B cell (primary cell): ENCODE measurements at regions of chr6 and their contacts with region 1.

Region 1: DNA sequence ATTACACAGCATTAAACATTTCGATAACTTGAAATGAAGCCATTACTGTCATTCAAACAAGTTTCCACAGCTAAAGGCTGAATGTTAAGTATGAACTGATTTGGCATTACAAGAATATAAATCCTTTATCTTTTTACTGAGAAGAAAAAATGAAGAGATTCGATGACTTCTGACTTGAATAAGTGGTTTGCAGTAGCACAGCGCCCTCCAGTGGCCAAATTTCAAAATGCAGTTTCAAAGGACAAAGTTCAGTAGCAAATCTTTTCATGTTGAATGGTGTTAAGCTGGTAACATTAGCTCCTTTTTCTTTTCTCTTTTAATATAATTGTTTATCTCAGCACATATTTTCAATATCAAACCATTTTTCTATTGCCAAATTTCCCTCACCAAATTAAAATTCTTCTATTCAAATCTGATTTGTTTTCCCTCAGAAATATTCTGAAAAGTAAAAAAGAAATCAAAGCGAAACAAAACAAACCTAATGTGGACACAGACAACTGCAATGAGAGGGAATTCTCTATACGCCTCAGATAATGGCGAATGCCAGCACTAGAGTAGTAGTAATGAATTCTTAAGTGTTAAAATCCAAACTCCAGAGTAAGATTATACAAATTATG is 145.7 kb downstream of the BTBD9 start:
- DNase-seq: peak; percentile 82
- ATAC-seq: peak; percentile 45
- H3K4me3 ChIP-seq: no peak overlapping the region
- H3K4me3 Mint-ChIP-seq: no peak overlapping the region
- H3K27ac ChIP-seq: no peak overlapping the region
- H3K27ac Mint-ChIP-seq: no peak overlapping the region
- H3K4me1 ChIP-seq: no peaks in the 10 kb centered on the region
- H3K4me1 Mint-ChIP-seq: peaks cover 11% of the 10 kb centered on the region
- H3K27me3 ChIP-seq: no peaks in the 10 kb centered on the region
- H3K27me3 Mint-ChIP-seq: no peaks in the 10 kb centered on the region
- CTCF ChIP-seq: peak; percentile 98

Region 2: DNA sequence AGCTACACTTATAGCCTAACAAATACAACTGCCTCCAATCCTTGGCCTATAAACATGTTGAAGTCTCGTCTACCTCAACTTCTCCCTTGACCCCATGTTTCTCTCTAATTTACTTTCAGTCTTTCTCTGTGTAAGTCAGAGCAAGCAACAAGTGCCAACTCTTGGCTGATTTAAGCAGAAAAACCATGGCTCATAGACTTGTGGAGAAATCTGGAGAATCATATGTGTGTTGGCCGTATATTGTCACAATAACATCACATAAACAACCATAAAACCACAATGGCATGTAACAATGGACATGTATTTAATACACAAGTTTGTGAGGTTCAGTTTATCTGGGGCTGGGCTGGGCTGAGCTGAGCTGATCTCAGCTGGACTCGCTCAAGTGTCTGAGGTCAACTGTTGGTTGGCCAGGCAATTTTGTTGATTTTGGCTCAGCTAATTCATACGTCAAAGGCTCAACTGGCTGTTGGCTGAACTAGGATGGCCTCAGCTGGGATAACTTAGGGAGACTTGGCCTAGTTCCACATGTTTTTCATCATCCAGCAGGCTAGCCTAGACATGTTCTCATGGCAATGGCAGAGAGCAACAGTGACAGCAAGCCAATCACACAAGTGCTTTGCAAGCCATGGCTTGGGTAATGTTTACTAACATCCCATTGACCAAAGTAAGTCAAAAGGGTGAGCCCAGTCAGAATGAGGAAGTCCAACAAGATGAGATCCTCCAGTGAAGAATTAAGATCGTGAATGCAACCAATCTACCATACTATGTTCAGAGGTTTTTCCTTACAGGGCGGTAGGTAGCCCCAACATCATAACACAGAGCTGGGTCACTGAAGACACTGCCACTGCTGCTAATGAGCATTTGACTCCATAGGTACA is 1249.4 kb before region 1 on chr6:
- CTCF ChIA-PET with region 1: no interaction called
- POLR2A ChIA-PET with region 1: no interaction called
- intact Hi-C with region 1: no loop called
- DNase-seq: no peak
- ATAC-seq: no peak
- H3K4me3 ChIP-seq: no peak overlapping the region
- H3K4me3 Mint-ChIP-seq: no peak overlapping the region
- H3K27ac ChIP-seq: no peak overlapping the region
- H3K27ac Mint-ChIP-seq: no peak overlapping the region
- H3K4me1 ChIP-seq: peaks cover 5 to 6% of the 10 kb centered on the region in 2 donors
- H3K4me1 Mint-ChIP-seq: peaks cover 4% of the 10 kb centered on the region
- H3K27me3 ChIP-seq: peaks cover 0 to 7% (median 0%) of the 10 kb centered on the region in 4 experiments
- H3K27me3 Mint-ChIP-seq: peaks cover 6% of the 10 kb centered on the region
- CTCF ChIP-seq: no peak

Region 3: DNA sequence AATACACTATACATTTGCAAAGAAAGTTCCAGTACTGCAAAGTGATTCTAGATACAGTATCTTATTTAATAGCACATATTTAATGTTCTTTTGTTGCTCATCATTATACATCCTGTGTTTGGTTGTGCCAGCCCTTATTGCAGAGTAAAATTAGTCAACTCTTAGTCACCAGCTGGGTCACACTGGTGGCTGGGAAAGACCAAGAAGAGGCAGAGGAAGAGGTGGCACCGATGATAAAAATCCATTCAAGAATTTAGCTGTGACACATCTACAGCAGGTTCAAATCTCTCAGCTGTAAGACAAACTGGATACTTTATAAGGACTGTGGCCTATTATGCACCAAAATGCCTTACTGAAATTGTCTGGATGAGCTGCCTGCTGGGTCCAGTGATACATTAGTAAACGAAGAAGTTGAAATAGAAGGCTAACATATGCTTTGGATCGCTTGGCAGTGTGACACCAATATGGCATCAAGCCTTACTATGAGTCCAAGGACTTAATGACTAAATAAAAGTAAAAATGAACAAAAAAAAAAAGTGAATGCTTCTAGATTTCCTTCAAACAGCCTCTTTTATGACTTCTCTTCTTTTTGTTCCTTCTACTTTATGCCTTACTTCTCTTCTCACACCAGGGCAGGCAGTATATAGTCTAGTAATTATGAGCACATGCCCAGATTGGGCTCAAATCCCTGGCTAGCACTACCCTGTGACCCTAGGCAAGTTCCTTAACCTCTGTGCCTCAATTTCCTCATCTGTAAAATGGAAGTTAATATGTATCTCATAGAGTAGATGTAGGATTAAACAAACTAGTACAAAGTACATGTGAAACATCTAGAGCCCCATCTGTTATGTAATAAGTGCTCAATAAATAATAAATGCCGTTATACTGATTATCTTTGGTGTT is 1169.7 kb before region 1 on chr6:
- CTCF ChIA-PET with region 1: no interaction called
- POLR2A ChIA-PET with region 1: no interaction called
- intact Hi-C with region 1: loop called (anchors 1 kb)
- DNase-seq: no peak
- ATAC-seq: no peak
- H3K4me3 ChIP-seq: no peak overlapping the region
- H3K4me3 Mint-ChIP-seq: no peak overlapping the region
- H3K27ac ChIP-seq: no peak overlapping the region
- H3K27ac Mint-ChIP-seq: no peak overlapping the region
- H3K4me1 ChIP-seq: no peaks in the 10 kb centered on the region
- H3K4me1 Mint-ChIP-seq: peaks cover 2% of the 10 kb centered on the region
- H3K27me3 ChIP-seq: no peaks in the 10 kb centered on the region
- H3K27me3 Mint-ChIP-seq: no peaks in the 10 kb centered on the region
- CTCF ChIP-seq: no peak

Region 4: GRCh38 chr6:37698261-37699137 is 795.5 kb before region 1 on chr6:
- CTCF ChIA-PET with region 1: interaction called, 7 read pairs
- POLR2A ChIA-PET with region 1: interaction called, 3 read pairs
- intact Hi-C with region 1: loop called (anchors 5 kb)
- DNase-seq: peak; percentile 83
- ATAC-seq: peak; percentile 37
- H3K4me3 ChIP-seq: peak overlapping the region; percentile 40 to 72 (median 60)
- H3K4me3 Mint-ChIP-seq: peak overlapping the region; percentile 88
- H3K27ac ChIP-seq: no peak overlapping the region
- H3K27ac Mint-ChIP-seq: peak overlapping the region; percentile 90
- H3K4me1 ChIP-seq: peaks cover 24 to 25% of the 10 kb centered on the region in 2 donors
- H3K4me1 Mint-ChIP-seq: peaks cover 26% of the 10 kb centered on the region
- H3K27me3 ChIP-seq: peaks cover 0 to 37% (median 18%) of the 10 kb centered on the region in 4 experiments
- H3K27me3 Mint-ChIP-seq: peaks cover 27% of the 10 kb centered on the region
- CTCF ChIP-seq: no peak

Region 5: GRCh38 chr6:38034274-38034914 is 459.6 kb before region 1 on chr6:
- CTCF ChIA-PET with region 1: interaction called, 24 read pairs
- POLR2A ChIA-PET with region 1: no interaction called
- intact Hi-C with region 1: loop called (anchors 1 kb)
- DNase-seq: peak; percentile 26
- ATAC-seq: no peak
- H3K4me3 ChIP-seq: no peak overlapping the region
- H3K4me3 Mint-ChIP-seq: no peak overlapping the region
- H3K27ac ChIP-seq: no peak overlapping the region
- H3K27ac Mint-ChIP-seq: no peak overlapping the region
- H3K4me1 ChIP-seq: peaks cover 0 to 16% of the 10 kb centered on the region in 2 donors
- H3K4me1 Mint-ChIP-seq: peaks cover 56% of the 10 kb centered on the region
- H3K27me3 ChIP-seq: no peaks in the 10 kb centered on the region
- H3K27me3 Mint-ChIP-seq: no peaks in the 10 kb centered on the region
- CTCF ChIP-seq: peak; percentile 40

Region 6: GRCh38 chr6:38518511-38519304 is 24.7 kb after region 1 on chr6:
- CTCF ChIA-PET with region 1: interaction called, 10 read pairs
- POLR2A ChIA-PET with region 1: no interaction called
- intact Hi-C with region 1: no loop called
- DNase-seq: no peak
- ATAC-seq: no peak
- H3K4me3 ChIP-seq: no peak overlapping the region
- H3K4me3 Mint-ChIP-seq: no peak overlapping the region
- H3K27ac ChIP-seq: no peak overlapping the region
- H3K27ac Mint-ChIP-seq: no peak overlapping the region
- H3K4me1 ChIP-seq: peaks cover 8 to 9% of the 10 kb centered on the region in 2 donors
- H3K4me1 Mint-ChIP-seq: peaks cover 20% of the 10 kb centered on the region
- H3K27me3 ChIP-seq: no peaks in the 10 kb centered on the region
- H3K27me3 Mint-ChIP-seq: no peaks in the 10 kb centered on the region
- CTCF ChIP-seq: no peak

Region 7: DNA sequence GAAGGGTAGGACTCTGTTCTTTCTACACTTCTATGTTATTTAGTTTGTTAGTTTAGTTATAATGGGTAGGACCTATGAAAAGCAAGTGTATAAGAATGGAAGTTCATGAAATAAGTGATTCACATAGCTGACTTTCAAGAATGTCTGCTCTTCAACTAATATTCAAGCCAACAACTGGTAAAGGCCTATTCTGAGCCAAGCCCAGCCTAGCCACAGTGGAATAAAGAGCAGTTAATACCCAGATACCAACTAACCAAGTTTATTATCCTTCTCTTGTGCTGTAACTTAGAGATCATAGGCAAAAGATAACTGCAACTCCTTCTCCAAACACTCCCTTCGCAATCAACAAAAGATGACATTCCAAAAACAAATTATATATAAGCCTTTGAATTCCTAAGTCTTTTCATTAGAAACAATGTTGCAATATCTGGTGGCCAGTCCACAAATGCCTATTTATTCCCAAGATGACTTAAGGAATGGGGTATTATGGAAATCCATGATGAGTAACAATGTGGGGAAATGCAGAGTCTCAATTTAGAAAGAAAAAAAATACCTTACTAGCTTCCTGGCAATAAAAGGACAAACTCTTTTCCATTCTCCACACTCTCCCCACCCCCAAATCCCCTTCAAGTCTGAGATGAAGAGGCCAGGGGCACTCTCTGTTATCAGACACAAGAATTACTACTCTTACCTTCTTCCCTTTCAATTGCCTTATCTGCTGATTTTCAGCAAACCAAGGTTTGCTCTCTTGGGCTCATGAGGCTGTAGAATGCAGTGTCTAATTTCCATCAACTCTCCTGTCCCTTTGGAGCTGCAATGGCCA is 118.3 kb after region 1 on chr6:
- CTCF ChIA-PET with region 1: no interaction called
- POLR2A ChIA-PET with region 1: no interaction called
- intact Hi-C with region 1: no loop called
- DNase-seq: no peak
- ATAC-seq: no peak
- H3K4me3 ChIP-seq: no peak overlapping the region
- H3K4me3 Mint-ChIP-seq: no peak overlapping the region
- H3K27ac ChIP-seq: no peak overlapping the region
- H3K27ac Mint-ChIP-seq: no peak overlapping the region
- H3K4me1 ChIP-seq: no peaks in the 10 kb centered on the region
- H3K4me1 Mint-ChIP-seq: peaks cover 19% of the 10 kb centered on the region
- H3K27me3 ChIP-seq: no peaks in the 10 kb centered on the region
- H3K27me3 Mint-ChIP-seq: no peaks in the 10 kb centered on the region
- CTCF ChIP-seq: no peak

Region 8: DNA sequence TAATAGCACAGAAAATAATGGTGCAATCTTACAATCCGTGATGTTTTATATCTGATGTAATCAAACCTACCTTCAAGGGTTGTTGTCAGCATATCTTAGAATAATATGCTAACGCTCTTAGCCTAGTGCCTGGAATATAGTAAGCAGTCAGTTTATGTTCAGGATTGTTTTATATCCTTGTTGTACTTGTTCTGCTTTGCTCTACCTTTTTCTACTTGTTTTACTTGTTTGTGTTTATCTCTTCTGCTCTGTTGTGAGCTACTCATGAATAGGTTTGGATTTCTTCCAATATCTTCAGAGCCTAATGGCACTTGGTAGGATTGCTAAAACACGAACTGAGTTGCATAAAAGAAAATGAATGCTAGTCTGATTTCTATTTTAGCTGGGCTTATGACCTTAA is 261.1 kb after region 1 on chr6:
- CTCF ChIA-PET with region 1: no interaction called
- POLR2A ChIA-PET with region 1: no interaction called
- intact Hi-C with region 1: no loop called
- DNase-seq: no peak
- ATAC-seq: no peak
- H3K4me3 ChIP-seq: no peak overlapping the region
- H3K4me3 Mint-ChIP-seq: no peak overlapping the region
- H3K27ac ChIP-seq: no peak overlapping the region
- H3K27ac Mint-ChIP-seq: no peak overlapping the region
- H3K4me1 ChIP-seq: no peaks in the 10 kb centered on the region
- H3K4me1 Mint-ChIP-seq: no peaks in the 10 kb centered on the region
- H3K27me3 ChIP-seq: no peaks in the 10 kb centered on the region
- H3K27me3 Mint-ChIP-seq: no peaks in the 10 kb centered on the region
- CTCF ChIP-seq: no peak